Psoas muscle (tissue), 8 donors: ENCODE measurements at regions of chr2 and their contacts with region 1.

Region 1: DNA sequence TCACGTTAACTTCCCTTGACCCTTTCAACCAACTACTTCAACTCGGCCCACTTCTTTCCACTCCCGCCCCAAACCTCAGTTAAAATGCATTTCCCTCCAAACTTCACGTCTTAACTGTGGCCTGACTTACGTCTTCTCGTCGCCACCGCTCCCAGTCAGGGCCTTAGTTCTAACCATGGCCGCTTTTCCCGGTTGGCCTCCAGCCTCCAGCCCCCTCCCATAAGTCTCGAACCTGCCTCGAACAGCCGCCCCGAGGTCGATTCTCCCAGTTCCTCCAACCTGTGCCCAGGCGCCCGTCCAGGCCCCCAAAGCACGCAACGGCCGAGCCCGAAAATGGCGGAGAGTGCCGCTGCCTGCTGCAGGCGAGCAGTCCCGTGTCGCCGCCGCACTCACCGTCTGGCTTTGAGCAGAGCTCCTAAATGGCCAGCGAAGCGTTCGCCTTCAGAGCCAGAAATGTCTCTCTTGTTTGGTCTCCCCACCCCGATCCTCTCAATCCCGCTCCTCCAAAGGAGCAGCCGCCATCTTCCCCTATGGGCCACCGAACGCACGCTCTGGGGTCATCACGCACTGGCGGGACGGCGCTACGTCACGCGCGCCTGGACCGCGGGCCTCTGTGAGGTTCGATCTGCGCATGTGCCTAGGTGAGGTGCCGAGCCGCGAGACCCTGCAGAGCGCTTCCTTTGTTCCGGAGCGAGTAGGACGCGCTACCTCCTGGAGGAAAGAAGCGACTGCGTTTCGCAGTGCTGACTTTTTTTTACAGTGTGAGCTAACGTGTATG is at the start of gene WDR33:
- DNase-seq: peak; percentile 90 to 94
- ATAC-seq: peak; percentile 99 to 100 (median 99)
- H3K4me3 ChIP-seq: peak within 1 kb of the TSS; percentile 79
- H3K27ac ChIP-seq: peak within 1 kb of the TSS; percentile 94
- H3K4me1 ChIP-seq: peaks cover 28% of the 10 kb centered on the region
- H3K27me3 ChIP-seq: no peaks in the 10 kb centered on the region
- CTCF ChIP-seq: no peak
- total RNA-seq, gene WDR33: 32.7 to 38.9 (median 34.9) TPM

Region 2: GRCh38 chr2:127174136-127174535 is 636.7 kb before region 1 on chr2:
- intact Hi-C with region 1: no loop called
- DNase-seq: peak in 1 of 2 donors; percentile 45
- ATAC-seq: peak; percentile 72 to 80 (median 76)
- H3K4me3 ChIP-seq: no peak overlapping the region
- H3K27ac ChIP-seq: peak overlapping the region; percentile 60
- H3K4me1 ChIP-seq: peaks cover 44% of the 10 kb centered on the region
- H3K27me3 ChIP-seq: no peaks in the 10 kb centered on the region
- CTCF ChIP-seq: peak; percentile 44

Region 3: DNA sequence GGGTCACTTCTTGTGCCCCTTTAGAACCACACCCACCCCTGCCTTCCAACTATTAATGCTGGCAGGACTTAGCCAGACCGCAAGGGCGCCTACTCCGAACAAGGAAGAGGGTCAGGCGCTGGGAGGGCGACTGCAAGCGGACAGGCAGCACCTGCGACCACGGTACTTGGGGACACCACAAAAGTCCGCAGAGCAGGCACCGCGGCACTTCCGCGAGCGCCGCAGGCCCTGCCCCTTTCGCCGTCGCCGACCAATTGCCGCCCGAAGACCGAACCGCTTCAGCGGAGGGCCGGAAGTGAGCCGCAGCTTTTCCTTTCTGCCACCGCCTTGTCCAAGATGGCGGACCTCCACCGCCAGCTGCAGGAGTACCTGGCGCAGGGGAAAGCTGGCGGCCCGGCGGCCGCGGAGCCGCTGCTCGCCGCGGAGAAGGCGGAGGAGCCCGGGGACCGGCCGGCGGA is 109.6 kb before region 1 on chr2 and contains the start of gene SFT2D3:
- intact Hi-C with region 1: loop called in 1 of 2 experiments (anchors 5 kb)
- DNase-seq: peak; percentile 92 to 97
- ATAC-seq: peak; percentile 86 to 90 (median 88)
- H3K4me3 ChIP-seq: peak within 1 kb of the TSS; percentile 82
- H3K27ac ChIP-seq: peak within 1 kb of the TSS; percentile 99
- H3K4me1 ChIP-seq: peaks cover 35% of the 10 kb centered on the region
- H3K27me3 ChIP-seq: no peaks in the 10 kb centered on the region
- CTCF ChIP-seq: no peak
- total RNA-seq, gene SFT2D3: 1.6 to 3.7 (median 2.1) TPM

Region 4: GRCh38 chr2:127735537-127736399 is 75.0 kb before region 1 on chr2:
- intact Hi-C with region 1: loop called in 1 of 2 experiments (anchors 5 kb)
- DNase-seq: no peak
- ATAC-seq: peak in 1 of 4 donors; percentile 46
- H3K4me3 ChIP-seq: no peak overlapping the region
- H3K27ac ChIP-seq: peak overlapping the region; percentile 59
- H3K4me1 ChIP-seq: peaks cover 19% of the 10 kb centered on the region
- H3K27me3 ChIP-seq: no peaks in the 10 kb centered on the region
- CTCF ChIP-seq: no peak

Region 5: DNA sequence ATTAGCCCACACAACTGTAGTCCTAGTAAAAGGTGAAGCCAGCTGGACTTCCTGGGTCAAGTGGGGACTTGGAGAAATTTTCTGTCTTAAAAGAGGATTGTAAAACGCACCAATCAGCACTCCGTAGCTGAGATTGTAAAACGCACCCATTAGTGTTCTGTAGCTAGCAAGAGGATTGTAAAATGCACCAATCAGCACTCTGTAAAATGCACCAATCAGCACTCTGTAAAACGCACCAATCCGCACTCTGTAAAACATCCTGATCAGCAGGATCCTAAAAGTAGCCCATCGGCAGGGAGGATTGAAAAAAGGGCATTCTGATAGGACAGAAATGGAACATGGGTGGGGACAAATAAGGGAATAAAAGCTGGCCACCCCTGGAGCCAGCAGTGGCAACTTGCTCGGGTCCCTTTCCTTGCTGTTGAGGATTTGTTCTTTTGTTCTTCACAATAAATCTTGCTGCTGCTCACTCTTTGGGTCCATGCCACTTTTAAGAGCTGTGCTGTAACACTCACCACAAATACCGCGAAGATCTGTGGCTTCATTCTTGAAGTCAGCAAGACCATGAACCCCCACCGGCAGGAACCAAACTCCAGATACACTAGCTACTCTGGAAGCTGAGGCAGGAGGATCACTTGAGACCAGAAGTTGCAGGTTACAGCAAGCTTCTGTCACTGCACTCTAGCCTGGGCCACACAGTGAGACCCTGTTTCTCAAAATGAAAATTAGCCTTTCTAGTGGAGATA is 405.3 kb after region 1 on chr2:
- intact Hi-C with region 1: no loop called
- DNase-seq: no peak
- ATAC-seq: no peak
- H3K4me3 ChIP-seq: no peak overlapping the region
- H3K27ac ChIP-seq: no peak overlapping the region
- H3K4me1 ChIP-seq: no peaks in the 10 kb centered on the region
- H3K27me3 ChIP-seq: no peaks in the 10 kb centered on the region
- CTCF ChIP-seq: no peak